ENCODE measurements at regions of chr9 and their contacts with region 1.

Region 1: DNA sequence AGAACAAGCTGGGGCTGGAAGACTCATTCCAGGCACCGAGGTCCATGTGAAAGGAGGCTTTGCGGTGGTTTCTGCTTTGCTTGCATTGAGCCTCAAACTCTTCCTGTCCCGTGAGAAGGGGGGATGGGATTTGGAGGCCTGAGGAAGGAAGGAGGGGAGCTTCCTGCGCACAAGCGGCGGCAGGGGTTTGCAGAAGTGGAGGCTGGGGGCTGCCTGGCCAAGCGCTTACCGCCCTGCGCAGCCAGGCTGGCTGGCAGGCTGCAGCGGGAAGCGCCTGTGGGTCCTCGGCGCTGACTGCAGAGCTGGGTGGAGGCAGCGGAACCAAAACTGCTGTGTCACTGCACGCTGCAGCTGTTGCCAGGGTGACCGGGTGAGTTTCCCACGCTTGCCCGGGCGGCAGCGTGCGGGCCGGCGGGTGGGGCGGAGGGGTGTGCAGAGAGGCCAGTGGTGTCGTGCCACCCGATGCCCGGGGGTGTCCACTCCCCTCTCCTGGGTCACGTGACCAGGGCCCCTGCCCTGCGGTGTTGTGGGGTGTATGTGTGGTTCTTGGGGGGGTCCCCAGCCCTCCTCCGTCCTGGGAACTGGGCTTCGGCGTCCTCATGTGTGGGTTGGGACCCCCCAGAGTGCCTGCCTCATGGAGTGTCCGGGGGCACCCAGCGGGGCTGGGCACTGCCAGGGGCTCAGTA is 81.0 kb downstream of the RXRA start:
- DNase-seq: peak; percentile 82
- ATAC-seq: peak; percentile 85
- H3K4me3 Mint-ChIP-seq: peak overlapping the region; percentile 73
- H3K27ac Mint-ChIP-seq: peak overlapping the region; percentile 13
- H3K4me1 Mint-ChIP-seq: peaks cover 25% of the 10 kb centered on the region
- H3K27me3 Mint-ChIP-seq: peaks cover 12% of the 10 kb centered on the region

Region 2: DNA sequence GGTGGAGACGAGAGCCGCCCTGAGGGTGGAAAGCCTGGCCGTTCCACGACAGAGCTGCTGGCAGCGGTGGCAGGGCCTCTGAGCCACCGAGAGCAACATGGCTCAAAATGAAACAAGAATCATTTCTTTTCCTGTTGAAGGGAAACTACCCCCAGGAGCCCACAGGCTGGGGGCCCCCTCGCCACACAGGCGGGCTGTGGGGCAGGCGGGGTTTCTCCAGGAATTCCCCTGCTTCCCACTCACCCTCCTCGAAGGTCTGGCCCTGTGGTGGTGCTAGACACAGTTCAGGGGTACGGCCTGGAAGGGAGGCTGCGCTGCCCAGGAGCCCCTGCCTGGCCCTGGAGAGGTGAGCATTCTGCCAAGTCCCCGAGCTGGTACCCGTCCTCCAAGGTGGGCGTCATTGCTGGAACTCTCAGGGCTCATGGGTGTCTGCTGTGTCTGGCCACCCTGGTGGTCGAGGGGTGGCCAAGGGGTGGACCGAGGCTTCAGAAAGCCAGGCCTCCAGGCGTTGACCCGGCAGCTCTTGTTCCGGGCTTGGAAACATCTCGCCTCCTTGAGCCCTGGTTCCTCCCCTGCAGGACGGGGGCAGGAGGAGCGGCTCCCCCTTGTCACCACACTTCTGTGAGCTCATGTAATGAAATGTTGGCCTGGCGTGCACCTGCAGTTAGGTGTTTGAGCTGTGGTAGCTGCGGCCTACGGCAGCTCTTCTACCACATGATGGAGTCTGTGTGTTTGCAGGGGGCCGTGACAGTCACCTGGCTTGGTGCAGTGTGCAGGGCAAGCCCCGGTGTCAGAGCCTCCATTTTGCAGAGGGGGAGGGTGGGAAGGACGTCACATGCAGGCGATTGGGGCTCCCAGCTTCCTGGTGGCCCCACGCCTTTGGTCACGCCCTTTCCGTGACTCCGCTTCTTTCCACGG is 15.7 kb before region 1 on chr9:
- POLR2A ChIA-PET with region 1: interaction called, 13 read pairs
- DNase-seq: peak; percentile 76
- ATAC-seq: peak; percentile 58
- H3K4me3 Mint-ChIP-seq: peak overlapping the region; percentile 77
- H3K27ac Mint-ChIP-seq: peak overlapping the region; percentile 86
- H3K4me1 Mint-ChIP-seq: peaks cover 42% of the 10 kb centered on the region
- H3K27me3 Mint-ChIP-seq: peaks cover 8% of the 10 kb centered on the region

Region 3: DNA sequence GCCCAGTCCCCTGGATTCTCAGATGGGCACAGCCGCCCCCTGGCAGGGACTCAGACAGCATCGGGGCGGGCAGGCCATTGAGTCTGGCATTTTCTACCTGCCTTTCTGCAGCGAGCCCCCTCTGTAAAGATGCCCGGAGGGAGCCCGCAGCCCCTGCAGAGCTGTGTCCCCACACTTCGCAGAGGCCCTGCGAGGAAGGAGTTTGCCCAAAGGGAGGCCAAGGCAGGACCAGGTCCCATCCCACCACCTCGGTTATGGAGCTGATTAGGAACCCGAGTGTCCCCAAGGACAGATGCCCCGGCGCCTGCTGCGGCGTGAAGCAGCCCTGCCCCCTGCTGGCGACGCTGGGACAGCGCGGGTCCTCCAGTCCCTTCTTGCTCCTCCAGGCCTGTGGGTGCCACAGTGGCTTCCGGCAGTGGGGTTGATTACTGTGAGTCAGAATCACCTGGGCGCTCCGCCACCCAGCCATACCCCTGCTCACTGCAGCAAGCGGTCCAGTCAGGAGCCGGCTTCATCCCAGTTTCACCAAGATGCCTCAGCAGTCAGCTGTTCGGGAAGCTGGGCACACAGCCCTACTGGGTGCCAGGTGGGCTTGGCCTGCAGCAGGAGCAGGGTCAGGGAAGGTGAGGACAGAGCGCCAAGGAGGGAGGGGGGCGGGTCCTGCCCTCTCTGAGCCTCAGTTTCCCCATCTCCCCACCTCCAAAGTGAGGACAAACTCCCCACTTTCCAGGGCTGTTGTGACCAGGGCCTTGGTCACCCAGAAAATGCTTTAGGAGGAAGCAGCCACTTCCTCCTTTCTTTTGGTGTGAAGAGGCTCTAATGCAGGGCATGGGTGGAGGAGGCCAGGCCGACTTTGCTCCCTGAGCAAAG is 36.1 kb after region 1 on chr9:
- POLR2A ChIA-PET with region 1: no interaction called
- DNase-seq: peak; percentile 87
- ATAC-seq: peak; percentile 100
- H3K4me3 Mint-ChIP-seq: peak overlapping the region; percentile 32
- H3K27ac Mint-ChIP-seq: no peak overlapping the region
- H3K4me1 Mint-ChIP-seq: peaks cover 11% of the 10 kb centered on the region
- H3K27me3 Mint-ChIP-seq: peaks cover 11% of the 10 kb centered on the region

Measured in activated naive CD8-positive, alpha-beta T cell treated with anti-CD3 and anti-CD28 coated beads, Interleukin-2, amount 10 ng/mL, durations not matched to agents 7 days and 5 days (primary cell).